ENCODE measurements at regions of chr1 and their contacts with region 1.

Region 1: DNA sequence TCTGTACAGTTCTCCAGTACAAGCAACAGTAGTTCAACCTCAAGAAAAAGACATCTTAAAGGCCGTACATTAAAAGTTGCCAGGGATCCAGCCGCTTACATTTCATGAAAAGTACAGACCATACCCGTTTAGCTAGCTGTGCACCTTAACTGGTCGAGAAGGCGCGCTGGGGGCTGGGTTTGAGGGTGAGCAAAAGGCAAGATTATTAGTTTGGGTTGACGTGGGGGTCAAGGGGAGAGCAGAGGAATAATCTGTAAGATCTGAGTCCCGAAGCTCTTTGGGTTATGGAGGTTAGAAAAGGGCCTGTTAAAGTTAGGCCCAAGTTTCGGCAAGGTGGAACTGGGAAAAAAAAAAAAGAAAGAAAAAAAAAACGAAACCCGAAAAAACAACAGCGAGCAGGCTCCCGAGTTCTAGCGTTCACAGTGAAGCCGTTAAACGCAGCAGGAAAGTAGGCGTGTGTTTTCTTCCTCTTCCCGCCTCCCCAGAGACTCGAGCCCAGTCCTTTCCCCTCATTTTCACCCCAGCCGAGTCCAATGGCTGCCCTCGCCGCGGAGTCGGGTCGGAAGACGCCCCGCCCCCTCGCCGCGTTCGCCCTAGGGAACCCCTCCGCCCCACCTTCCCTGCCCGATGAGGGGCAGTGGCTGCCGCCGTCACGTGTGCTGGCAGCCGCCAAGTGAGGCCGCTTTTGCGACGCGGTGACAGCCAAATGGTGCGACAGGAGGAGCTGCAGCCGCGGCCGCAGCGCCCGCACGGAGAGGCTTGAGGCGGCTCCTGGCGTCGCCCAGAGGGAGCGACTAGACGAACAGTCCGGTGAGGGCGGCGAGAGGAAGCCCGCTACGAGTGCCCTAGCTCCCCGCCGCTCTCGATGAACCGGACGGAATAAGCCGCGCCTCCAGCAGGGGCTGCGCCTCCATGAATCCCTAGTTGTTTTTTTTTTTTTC is at the start of gene PKN2:
- DNase-seq: peak; percentile 98
- H3K4me3 Mint-ChIP-seq: peak within 1 kb of the TSS; percentile 97
- H3K27ac Mint-ChIP-seq: peak within 1 kb of the TSS; percentile 93
- H3K4me1 Mint-ChIP-seq: peaks cover 31% of the 10 kb centered on the region
- H3K27me3 Mint-ChIP-seq: no peaks in the 10 kb centered on the region
- total RNA-seq, gene PKN2: 17.2 to 17.9 TPM

Region 2: GRCh38 chr1:87045761-87046304 is 1638.0 kb before region 1 on chr1:
- CTCF ChIA-PET with region 1: no interaction called
- intact Hi-C with region 1: loop called (anchors 5 kb)
- DNase-seq: peak; percentile 82
- H3K4me3 Mint-ChIP-seq: peak overlapping the region; percentile 33
- H3K27ac Mint-ChIP-seq: peak overlapping the region; percentile 79
- H3K4me1 Mint-ChIP-seq: peaks cover 45% of the 10 kb centered on the region
- H3K27me3 Mint-ChIP-seq: no peaks in the 10 kb centered on the region

Region 3: GRCh38 chr1:88736639-88737248 is 52.9 kb after region 1 on chr1:
- CTCF ChIA-PET with region 1: interaction called, 10 read pairs
- intact Hi-C with region 1: no loop called
- DNase-seq: peak; percentile 45
- H3K4me3 Mint-ChIP-seq: no peak overlapping the region
- H3K27ac Mint-ChIP-seq: no peak overlapping the region
- H3K4me1 Mint-ChIP-seq: peaks cover 9% of the 10 kb centered on the region
- H3K27me3 Mint-ChIP-seq: no peaks in the 10 kb centered on the region

Region 4: GRCh38 chr1:88867743-88868521 is 184.1 kb after region 1 on chr1:
- CTCF ChIA-PET with region 1: no interaction called
- intact Hi-C with region 1: loop called (anchors 1 kb)
- DNase-seq: no peak
- H3K4me3 Mint-ChIP-seq: no peak overlapping the region
- H3K27ac Mint-ChIP-seq: peak overlapping the region; percentile 84
- H3K4me1 Mint-ChIP-seq: peaks cover 57% of the 10 kb centered on the region
- H3K27me3 Mint-ChIP-seq: no peaks in the 10 kb centered on the region

Region 5: DNA sequence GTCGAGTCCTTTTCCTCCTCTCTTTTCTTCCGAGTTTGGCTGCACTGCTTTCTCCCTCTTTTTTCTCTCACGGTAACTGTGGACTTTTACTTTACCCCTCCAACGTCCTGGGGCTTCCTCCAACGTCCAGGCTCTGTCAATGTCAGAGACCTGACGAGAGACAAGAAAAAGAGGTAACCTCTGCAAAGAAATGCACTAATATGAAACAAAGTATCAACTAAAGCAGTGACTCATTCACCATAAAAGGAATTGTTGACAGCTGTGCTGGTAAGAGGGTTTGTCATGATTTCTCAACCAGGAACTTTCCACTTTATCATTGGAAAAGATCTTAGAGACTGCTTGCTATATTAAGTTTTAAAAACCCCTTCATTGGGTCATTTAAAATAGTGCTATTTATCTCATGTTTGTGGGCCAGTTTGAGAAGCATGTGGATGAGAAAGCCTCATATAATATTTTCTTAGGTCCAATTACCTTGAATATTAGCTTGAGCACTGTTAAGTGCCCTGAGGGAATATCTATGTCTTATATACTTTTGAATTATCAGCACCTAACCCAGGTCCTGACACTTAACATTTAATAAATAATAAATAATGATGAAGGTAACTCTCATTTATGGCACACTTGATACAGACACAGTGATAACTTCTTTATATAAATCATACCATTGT is 442.2 kb after region 1 on chr1 and contains the start of gene GBP2:
- CTCF ChIA-PET with region 1: no interaction called
- intact Hi-C with region 1: loop called (anchors 1 kb)
- DNase-seq: peak; percentile 44
- H3K4me3 Mint-ChIP-seq: peak within 1 kb of the TSS; percentile 91
- H3K27ac Mint-ChIP-seq: peak within 1 kb of the TSS; percentile 96
- H3K4me1 Mint-ChIP-seq: peaks cover 44% of the 10 kb centered on the region
- H3K27me3 Mint-ChIP-seq: no peaks in the 10 kb centered on the region
- total RNA-seq, gene GBP2: 338 to 351 TPM